B cell (primary cell): ENCODE measurements at regions of chr7 and their contacts with region 1.

Region 1: DNA sequence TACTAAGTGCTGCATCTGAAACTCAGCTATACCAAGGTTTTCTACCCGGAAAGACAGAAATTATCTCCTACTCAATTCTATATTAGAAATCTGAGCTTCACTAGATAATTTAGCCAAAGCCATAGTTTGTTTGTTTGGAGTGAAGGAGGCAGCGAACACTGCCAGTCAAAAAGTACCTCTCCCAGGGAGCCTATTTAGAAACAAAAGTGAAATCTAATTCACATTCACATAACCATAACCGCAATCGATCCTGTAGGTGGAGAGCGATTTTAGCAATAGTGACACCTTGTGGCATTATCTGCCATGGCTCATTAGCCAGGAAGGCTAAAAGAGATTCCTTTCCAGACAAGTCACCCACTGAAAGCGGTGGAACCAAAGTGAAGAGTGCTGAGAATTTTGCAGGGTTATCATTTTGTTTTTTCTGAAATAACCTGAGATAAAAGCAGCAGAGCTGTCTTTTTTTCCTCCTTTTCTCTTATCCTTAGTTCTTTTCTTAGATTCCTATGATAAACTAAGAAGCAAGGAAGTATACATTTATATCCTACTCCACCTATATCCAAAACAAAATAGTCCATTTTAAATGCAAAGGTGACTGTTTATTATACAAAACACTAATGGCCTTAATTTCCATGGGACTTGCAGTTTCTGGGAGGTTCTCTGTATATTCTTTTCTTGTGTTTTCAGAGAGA is 83.7 kb upstream of the BET1 start:
- DNase-seq: peak; percentile 85
- ATAC-seq: peak; percentile 83
- H3K4me3 ChIP-seq: peak overlapping the region; percentile 11 to 66 (median 42)
- H3K4me3 Mint-ChIP-seq: peak overlapping the region; percentile 78
- H3K27ac ChIP-seq: peak overlapping the region; percentile 28 to 51
- H3K27ac Mint-ChIP-seq: peak overlapping the region; percentile 79
- H3K4me1 ChIP-seq: peaks cover 14% of the 10 kb centered on the region in 2 donors
- H3K4me1 Mint-ChIP-seq: peaks cover 17% of the 10 kb centered on the region
- H3K27me3 ChIP-seq: no peaks in the 10 kb centered on the region
- H3K27me3 Mint-ChIP-seq: no peaks in the 10 kb centered on the region
- CTCF ChIP-seq: peak; percentile 87

Region 2: GRCh38 chr7:92489634-92490033 is 1598.2 kb before region 1 on chr7:
- CTCF ChIA-PET with region 1: no interaction called
- POLR2A ChIA-PET with region 1: no interaction called
- intact Hi-C with region 1: no loop called
- DNase-seq: no peak
- ATAC-seq: no peak
- H3K4me3 ChIP-seq: no peak overlapping the region
- H3K4me3 Mint-ChIP-seq: no peak overlapping the region
- H3K27ac ChIP-seq: no peak overlapping the region
- H3K27ac Mint-ChIP-seq: no peak overlapping the region
- H3K4me1 ChIP-seq: no peaks in the 10 kb centered on the region
- H3K4me1 Mint-ChIP-seq: no peaks in the 10 kb centered on the region
- H3K27me3 ChIP-seq: no peaks in the 10 kb centered on the region
- H3K27me3 Mint-ChIP-seq: no peaks in the 10 kb centered on the region
- CTCF ChIP-seq: no peak

Region 3: DNA sequence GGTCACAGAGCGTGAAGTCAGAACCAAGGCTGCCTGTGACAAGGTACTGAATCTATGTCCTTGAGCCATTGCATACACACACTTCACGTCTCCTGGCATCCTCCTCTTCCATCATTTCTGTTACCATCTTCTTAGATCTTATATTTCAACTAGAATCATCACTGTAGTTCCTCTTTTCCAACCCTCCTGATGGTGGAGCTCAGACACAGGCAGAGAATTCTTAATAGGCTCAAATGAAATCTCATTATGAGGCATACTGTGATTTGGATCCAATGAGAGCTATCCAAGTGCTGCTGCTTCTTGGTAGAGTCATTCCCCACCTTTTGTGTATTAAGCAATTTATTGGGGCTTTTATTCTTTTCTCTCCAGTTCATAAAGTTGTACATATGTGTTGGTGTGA is 626.5 kb before region 1 on chr7:
- CTCF ChIA-PET with region 1: no interaction called
- POLR2A ChIA-PET with region 1: no interaction called
- intact Hi-C with region 1: loop called (anchors 5 kb)
- DNase-seq: peak; percentile 21
- ATAC-seq: no peak
- H3K4me3 ChIP-seq: no peak overlapping the region
- H3K4me3 Mint-ChIP-seq: no peak overlapping the region
- H3K27ac ChIP-seq: no peak overlapping the region
- H3K27ac Mint-ChIP-seq: no peak overlapping the region
- H3K4me1 ChIP-seq: no peaks in the 10 kb centered on the region
- H3K4me1 Mint-ChIP-seq: no peaks in the 10 kb centered on the region
- H3K27me3 ChIP-seq: no peaks in the 10 kb centered on the region
- H3K27me3 Mint-ChIP-seq: peaks cover 21% of the 10 kb centered on the region
- CTCF ChIP-seq: peak; percentile 23

Region 4: DNA sequence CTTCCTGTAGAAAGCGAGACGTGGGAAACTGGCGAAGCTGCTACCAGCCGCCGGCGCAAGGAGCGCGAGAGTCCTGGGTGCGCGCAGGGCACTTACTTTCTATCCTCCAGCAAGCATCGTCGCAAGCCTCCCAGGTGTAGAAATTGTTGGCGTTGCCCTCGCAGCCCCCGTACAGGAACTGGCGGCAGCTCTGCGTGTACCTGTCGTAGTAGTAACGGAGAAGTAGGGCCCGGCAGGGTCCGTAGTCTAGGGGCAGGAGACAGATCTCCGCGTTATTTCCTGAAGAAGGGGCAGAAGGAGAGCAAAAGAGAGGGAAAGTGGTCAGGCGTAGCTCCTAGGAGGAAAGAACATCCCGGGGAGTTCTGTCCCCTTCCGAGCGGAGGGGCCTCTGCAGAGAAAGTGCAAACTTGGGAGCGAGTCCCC is 197.8 kb before region 1 on chr7:
- CTCF ChIA-PET with region 1: interaction called, 10 read pairs
- POLR2A ChIA-PET with region 1: no interaction called
- intact Hi-C with region 1: no loop called
- DNase-seq: peak; percentile 35
- ATAC-seq: no peak
- H3K4me3 ChIP-seq: peak overlapping the region; percentile 31 to 79 (median 44)
- H3K4me3 Mint-ChIP-seq: peak overlapping the region; percentile 94
- H3K27ac ChIP-seq: no peak overlapping the region
- H3K27ac Mint-ChIP-seq: peak overlapping the region; percentile 53
- H3K4me1 ChIP-seq: peaks cover 14% of the 10 kb centered on the region in 2 donors
- H3K4me1 Mint-ChIP-seq: peaks cover 15% of the 10 kb centered on the region
- H3K27me3 ChIP-seq: peaks cover 0 to 34% (median 25%) of the 10 kb centered on the region in 4 experiments
- H3K27me3 Mint-ChIP-seq: peaks cover 63% of the 10 kb centered on the region
- CTCF ChIP-seq: no peak

Region 5: DNA sequence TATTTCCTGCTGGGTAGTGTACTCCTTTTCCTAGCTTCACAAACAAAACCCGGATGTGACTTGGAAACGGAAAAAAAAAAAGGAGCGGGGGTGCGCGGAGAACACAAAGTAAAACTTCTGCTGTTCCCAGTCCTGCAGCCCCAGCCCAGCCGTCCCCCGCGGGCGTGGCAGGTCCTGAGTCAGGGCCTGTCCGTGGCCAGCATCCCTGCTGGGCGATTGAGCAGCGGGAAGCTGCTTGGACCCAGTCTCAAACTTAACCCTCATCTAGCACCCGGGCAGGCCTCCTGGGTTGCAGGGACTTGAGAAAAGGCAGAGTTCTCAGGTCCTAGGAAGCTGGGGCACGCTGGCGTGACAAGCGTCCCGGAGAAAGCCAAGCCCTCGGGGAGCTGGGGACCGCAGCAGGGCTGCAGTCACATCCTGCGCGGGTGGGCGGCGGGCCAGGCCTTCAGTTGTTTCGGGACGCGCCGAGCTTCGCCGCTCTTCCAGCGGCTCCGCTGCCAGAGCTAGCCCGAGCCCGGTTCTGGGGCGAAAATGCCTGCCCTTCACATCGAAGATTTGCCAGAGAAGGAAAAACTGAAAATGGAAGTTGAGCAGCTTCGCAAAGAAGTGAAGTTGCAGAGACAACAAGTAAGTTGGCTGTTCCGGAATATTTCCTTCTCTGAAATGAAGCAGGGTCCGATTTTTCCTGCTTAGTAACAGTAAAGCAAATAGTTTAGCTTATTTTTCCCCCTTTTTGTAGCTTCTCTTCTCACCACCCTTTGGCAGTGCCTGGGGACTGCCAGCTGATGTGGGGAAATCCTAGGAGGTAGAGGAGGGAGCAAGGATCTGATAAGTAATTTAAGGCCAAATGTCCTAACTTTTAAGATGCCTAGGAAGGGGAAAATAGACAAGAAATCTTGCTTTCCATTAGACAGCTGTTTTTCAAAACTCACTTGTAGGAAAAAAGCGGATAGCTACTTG is 165.9 kb before region 1 on chr7 and contains the start of gene GNG11:
- CTCF ChIA-PET with region 1: interaction called, 22 read pairs
- POLR2A ChIA-PET with region 1: no interaction called
- intact Hi-C with region 1: loop called (anchors 5 kb)
- DNase-seq: peak; percentile 59
- ATAC-seq: peak; percentile 79
- H3K4me3 ChIP-seq: peak within 1 kb of the TSS; percentile 53 to 83 (median 76)
- H3K4me3 Mint-ChIP-seq: peak within 1 kb of the TSS; percentile 88
- H3K27ac ChIP-seq: peak within 1 kb of the TSS in 1 of 2 donors; percentile 73
- H3K27ac Mint-ChIP-seq: peak within 1 kb of the TSS; percentile 86
- H3K4me1 ChIP-seq: peaks cover 13 to 14% of the 10 kb centered on the region in 2 donors
- H3K4me1 Mint-ChIP-seq: peaks cover 23% of the 10 kb centered on the region
- H3K27me3 ChIP-seq: peaks cover 0 to 6% (median 0%) of the 10 kb centered on the region in 4 experiments
- H3K27me3 Mint-ChIP-seq: peaks cover 13% of the 10 kb centered on the region
- CTCF ChIP-seq: no peak
- total RNA-seq, gene GNG11: 1.6 and 1.7 TPM in 2 replicates

Region 6: GRCh38 chr7:94050046-94050445 is 37.8 kb before region 1 on chr7:
- CTCF ChIA-PET with region 1: interaction called, 14 read pairs
- POLR2A ChIA-PET with region 1: no interaction called
- intact Hi-C with region 1: loop called (anchors 1 kb)
- DNase-seq: peak; percentile 89
- ATAC-seq: peak; percentile 82
- H3K4me3 ChIP-seq: peak overlapping the region in 4 of 5 experiments; percentile 7 to 60 (median 33)
- H3K4me3 Mint-ChIP-seq: peak overlapping the region; percentile 81
- H3K27ac ChIP-seq: peak overlapping the region; percentile 84 to 89
- H3K27ac Mint-ChIP-seq: peak overlapping the region; percentile 91
- H3K4me1 ChIP-seq: peaks cover 67 to 70% of the 10 kb centered on the region in 2 donors
- H3K4me1 Mint-ChIP-seq: peaks cover 67% of the 10 kb centered on the region
- H3K27me3 ChIP-seq: no peaks in the 10 kb centered on the region
- H3K27me3 Mint-ChIP-seq: no peaks in the 10 kb centered on the region
- CTCF ChIP-seq: no peak

Region 7: GRCh38 chr7:94142281-94142680 is 54.5 kb after region 1 on chr7:
- CTCF ChIA-PET with region 1: no interaction called
- POLR2A ChIA-PET with region 1: no interaction called
- intact Hi-C with region 1: no loop called
- DNase-seq: no peak
- ATAC-seq: no peak
- H3K4me3 ChIP-seq: no peak overlapping the region
- H3K4me3 Mint-ChIP-seq: no peak overlapping the region
- H3K27ac ChIP-seq: no peak overlapping the region
- H3K27ac Mint-ChIP-seq: no peak overlapping the region
- H3K4me1 ChIP-seq: no peaks in the 10 kb centered on the region
- H3K4me1 Mint-ChIP-seq: no peaks in the 10 kb centered on the region
- H3K27me3 ChIP-seq: peaks cover 0 to 2% (median 0%) of the 10 kb centered on the region in 4 experiments
- H3K27me3 Mint-ChIP-seq: peaks cover 27% of the 10 kb centered on the region
- CTCF ChIP-seq: no peak

Region 8: GRCh38 chr7:94223375-94224070 is 135.7 kb after region 1 on chr7:
- CTCF ChIA-PET with region 1: interaction called, 3 read pairs
- POLR2A ChIA-PET with region 1: no interaction called
- intact Hi-C with region 1: loop called (anchors 1 kb)
- DNase-seq: peak; percentile 32
- ATAC-seq: peak; percentile 45
- H3K4me3 ChIP-seq: no peak overlapping the region
- H3K4me3 Mint-ChIP-seq: no peak overlapping the region
- H3K27ac ChIP-seq: no peak overlapping the region
- H3K27ac Mint-ChIP-seq: no peak overlapping the region
- H3K4me1 ChIP-seq: no peaks in the 10 kb centered on the region
- H3K4me1 Mint-ChIP-seq: no peaks in the 10 kb centered on the region
- H3K27me3 ChIP-seq: peaks cover 0 to 2% (median 0%) of the 10 kb centered on the region in 4 experiments
- H3K27me3 Mint-ChIP-seq: no peaks in the 10 kb centered on the region
- CTCF ChIP-seq: peak; percentile 45